Activated naive CD4-positive, alpha-beta T cell treated with anti-CD3 and anti-CD28 coated beads for 36 hours (primary cell): ENCODE measurements at regions of chr13 and their contacts with region 1.

Region 1: DNA sequence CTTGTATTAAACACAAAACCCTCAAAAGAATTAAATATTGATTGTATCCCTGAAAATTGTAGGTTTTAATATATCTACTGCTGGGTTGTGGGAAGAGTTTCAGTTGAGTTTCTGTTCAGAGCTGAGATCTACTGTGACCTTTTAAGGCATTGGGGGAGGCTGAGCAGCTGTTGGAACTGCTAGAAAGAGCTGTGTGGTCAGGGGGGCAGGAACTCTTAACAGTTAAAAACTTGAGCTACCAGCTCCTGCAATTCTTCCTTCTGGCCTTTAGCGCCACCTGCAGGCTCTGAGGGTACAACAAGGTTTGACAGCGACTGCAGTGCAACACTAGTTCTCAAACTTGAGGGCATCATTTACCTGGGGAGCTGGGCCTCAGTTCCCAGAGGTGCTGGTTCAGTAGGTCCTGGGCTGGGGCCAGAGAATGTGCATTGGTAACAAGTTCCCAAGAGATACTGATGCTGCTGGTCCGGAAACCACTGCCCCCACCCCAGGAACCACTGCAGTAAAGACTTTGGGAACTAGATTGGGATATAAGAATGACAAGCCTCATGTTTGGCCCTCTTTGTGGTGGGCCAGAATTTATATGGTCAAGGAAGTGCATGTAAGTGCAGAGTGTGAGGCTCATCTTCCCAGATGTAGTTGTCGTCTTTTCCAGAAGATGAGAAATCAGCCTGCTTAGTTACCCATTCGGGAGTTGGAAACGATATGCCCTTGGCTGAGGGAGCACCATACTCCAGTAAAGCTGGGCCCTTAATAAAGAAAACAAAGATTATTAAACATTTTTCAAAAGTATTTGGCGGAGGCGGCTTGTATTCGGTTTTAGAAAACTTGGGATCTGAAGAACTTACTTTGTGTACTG is 2.6 kb downstream of the RNASEH2B start:
- DNase-seq: peak; percentile 97
- H3K4me3 Mint-ChIP-seq: peak overlapping the region; percentile 94
- H3K27ac Mint-ChIP-seq: peak overlapping the region; percentile 75
- H3K4me1 Mint-ChIP-seq: peaks cover 46% of the 10 kb centered on the region
- H3K27me3 Mint-ChIP-seq: no peaks in the 10 kb centered on the region

Region 2: DNA sequence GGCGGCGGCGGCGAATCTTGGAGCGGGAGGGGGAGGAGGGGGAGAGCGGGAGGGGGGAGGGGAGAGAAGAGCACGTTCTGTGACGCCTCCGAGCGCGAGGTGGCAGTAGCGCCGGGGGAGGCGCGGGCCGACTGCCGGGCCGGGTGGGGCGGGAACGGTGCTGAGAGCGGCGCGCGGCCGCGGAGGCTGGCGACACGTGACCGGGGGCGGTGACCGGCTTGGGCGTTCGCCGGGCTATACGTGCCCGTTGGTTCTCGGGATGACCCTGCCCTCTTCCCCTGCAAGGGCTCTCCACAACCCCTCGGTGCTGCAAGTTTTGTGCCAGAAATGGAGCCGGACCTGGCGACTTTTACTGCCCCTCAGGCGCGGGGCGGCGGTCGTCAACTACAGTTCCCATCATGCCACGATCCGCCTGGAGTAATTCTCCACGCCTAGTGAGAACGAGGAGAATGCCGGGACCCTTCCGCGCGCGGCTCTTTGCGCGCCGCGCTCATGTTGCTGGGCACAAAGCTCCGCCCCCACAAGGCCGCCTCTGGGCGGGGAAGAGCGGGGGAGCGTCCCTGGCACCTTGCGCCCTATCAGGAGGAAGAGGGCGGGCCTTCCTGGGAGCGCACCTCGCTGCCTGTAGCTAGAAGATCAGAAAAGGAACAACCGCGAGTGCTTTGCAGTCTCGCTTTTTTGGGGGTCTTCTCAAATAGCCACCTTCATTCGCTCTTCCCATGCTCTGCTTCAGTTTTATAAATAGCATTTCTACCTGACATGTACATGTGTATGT is 1119.4 kb before region 1 on chr13 and contains the start of gene KPNA3:
- CTCF ChIA-PET with region 1: no interaction called
- intact Hi-C with region 1: loop called (anchors 2 kb)
- DNase-seq: peak; percentile 96
- H3K4me3 Mint-ChIP-seq: peak within 1 kb of the TSS; percentile 92
- H3K27ac Mint-ChIP-seq: peak within 1 kb of the TSS; percentile 94
- H3K4me1 Mint-ChIP-seq: peaks cover 29% of the 10 kb centered on the region
- H3K27me3 Mint-ChIP-seq: peaks cover 4% of the 10 kb centered on the region
- total RNA-seq, gene KPNA3: 47.9 to 50.7 TPM

Region 3: GRCh38 chr13:49996951-49997895 is 914.9 kb before region 1 on chr13 and contains the start of gene TRIM13:
- CTCF ChIA-PET with region 1: interaction called, 4 read pairs
- intact Hi-C with region 1: loop called (anchors 1 kb)
- DNase-seq: peak; percentile 90
- H3K4me3 Mint-ChIP-seq: peak within 1 kb of the TSS; percentile 79
- H3K27ac Mint-ChIP-seq: peak within 1 kb of the TSS; percentile 85
- H3K4me1 Mint-ChIP-seq: peaks cover 33% of the 10 kb centered on the region
- H3K27me3 Mint-ChIP-seq: no peaks in the 10 kb centered on the region
- total RNA-seq, gene TRIM13: 15.5 to 15.8 TPM

Region 4: GRCh38 chr13:50319635-50320255 is 592.4 kb before region 1 on chr13:
- CTCF ChIA-PET with region 1: interaction called, 3 read pairs
- intact Hi-C with region 1: loop called (anchors 5 kb)
- DNase-seq: no peak
- H3K4me3 Mint-ChIP-seq: no peak overlapping the region
- H3K27ac Mint-ChIP-seq: no peak overlapping the region
- H3K4me1 Mint-ChIP-seq: peaks cover 12% of the 10 kb centered on the region
- H3K27me3 Mint-ChIP-seq: no peaks in the 10 kb centered on the region

Region 5: GRCh38 chr13:50529154-50529882 is 382.8 kb before region 1 on chr13:
- CTCF ChIA-PET with region 1: interaction called, 3 read pairs
- intact Hi-C with region 1: loop called (anchors 2 kb)
- DNase-seq: peak; percentile 49
- H3K4me3 Mint-ChIP-seq: no peak overlapping the region
- H3K27ac Mint-ChIP-seq: no peak overlapping the region
- H3K4me1 Mint-ChIP-seq: peaks cover 18% of the 10 kb centered on the region
- H3K27me3 Mint-ChIP-seq: peaks cover 13% of the 10 kb centered on the region

Region 6: DNA sequence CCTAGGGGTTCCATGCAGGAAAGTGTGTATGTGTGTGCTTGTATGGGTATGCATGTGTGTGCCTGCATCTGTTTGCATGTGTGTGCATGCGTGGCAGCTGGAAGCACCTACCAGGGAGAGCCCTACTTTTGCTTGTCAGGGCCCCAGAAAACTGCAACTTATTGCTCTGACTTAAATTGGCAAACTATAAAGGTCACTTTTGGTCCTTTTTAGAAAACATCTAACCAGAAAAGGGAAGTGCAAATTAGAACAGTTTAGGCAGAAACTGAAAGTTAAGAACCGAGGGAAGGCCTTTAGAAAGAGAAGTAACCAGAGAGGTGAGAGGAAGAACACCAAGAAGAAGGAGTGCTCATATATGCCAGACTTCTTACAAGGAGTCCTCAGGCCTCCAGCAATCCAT is 101.2 kb before region 1 on chr13:
- CTCF ChIA-PET with region 1: interaction called, 16 read pairs
- intact Hi-C with region 1: no loop called
- DNase-seq: no peak
- H3K4me3 Mint-ChIP-seq: no peak overlapping the region
- H3K27ac Mint-ChIP-seq: no peak overlapping the region
- H3K4me1 Mint-ChIP-seq: peaks cover 4% of the 10 kb centered on the region
- H3K27me3 Mint-ChIP-seq: no peaks in the 10 kb centered on the region

Region 7: DNA sequence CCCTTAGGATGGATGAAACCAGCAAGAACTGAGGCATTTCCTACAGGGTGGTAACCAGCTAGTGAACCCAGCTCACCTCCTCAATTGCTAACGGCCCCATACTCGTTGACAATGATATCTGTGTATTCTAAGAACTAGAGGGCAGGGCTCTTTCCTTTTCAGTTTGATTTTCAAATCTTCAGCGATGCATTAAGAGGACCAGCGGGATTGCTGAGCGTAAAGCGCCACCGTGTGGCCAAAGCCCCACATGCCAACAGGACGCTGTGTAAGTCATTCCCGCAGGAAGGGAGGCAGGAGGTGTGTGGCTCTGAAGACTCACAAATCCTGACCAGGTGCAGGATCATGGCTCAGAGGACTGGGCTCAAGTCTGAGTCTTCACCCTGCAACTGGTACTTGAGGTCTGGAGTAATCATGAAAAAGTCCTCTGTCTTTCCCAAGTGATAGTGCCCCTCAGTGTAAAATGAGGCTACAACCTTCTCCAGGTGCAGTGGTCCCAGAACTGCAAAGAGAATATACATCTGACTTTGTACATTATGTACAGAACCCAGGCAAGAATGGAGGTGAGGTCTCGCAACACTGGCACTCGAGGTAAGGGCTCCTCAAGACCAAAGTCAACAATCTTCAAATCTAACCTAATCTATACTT is 158.0 kb after region 1 on chr13:
- CTCF ChIA-PET with region 1: interaction called, 5 read pairs
- intact Hi-C with region 1: loop called (anchors 1 kb)
- DNase-seq: peak; percentile 88
- H3K4me3 Mint-ChIP-seq: no peak overlapping the region
- H3K27ac Mint-ChIP-seq: no peak overlapping the region
- H3K4me1 Mint-ChIP-seq: peaks cover 3% of the 10 kb centered on the region
- H3K27me3 Mint-ChIP-seq: peaks cover 3% of the 10 kb centered on the region